ENCODE measurements at regions of chr1 and their contacts with region 1.

Region 1: DNA sequence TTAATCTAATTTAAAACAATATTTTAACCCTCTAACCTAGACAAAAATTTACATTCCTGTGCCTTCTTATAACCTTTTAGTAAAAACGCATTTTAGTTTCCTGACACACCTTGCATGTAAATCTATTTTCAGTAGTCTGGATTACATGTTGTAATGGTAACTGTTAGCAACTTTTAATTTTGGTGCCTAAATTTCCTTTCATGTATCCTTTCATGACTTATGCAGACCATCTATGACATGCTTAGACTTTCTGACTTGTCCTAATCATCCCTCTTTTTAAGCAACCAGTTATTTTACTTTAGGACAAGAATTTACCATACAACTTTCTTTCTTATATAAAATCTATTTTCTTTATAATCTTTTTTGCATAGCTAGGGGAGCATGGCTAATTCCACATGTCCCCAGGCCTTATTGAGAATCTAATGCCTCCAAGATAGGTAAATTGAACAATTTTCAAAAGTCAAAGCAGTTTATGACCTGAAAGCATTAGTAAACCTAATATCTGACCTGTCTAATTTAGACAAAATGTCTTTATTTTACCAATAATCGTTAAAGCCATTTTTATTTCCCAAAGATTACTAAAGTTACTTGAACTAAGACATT is 57.5 kb upstream of the IL12RB2 start:
- DNase-seq: no peak
- ATAC-seq: no peak
- H3K4me3 ChIP-seq: no peak overlapping the region
- H3K4me3 Mint-ChIP-seq: no peak overlapping the region
- H3K27ac ChIP-seq: no peak overlapping the region
- H3K27ac Mint-ChIP-seq: no peak overlapping the region
- H3K4me1 ChIP-seq: no peaks in the 10 kb centered on the region
- H3K4me1 Mint-ChIP-seq: no peaks in the 10 kb centered on the region
- H3K27me3 ChIP-seq: no peaks in the 10 kb centered on the region
- H3K27me3 Mint-ChIP-seq: no peaks in the 10 kb centered on the region
- CTCF ChIP-seq: no peak

Region 2: GRCh38 chr1:67261680-67262079 is 11.5 kb after region 1 on chr1:
- CTCF ChIA-PET with region 1: no interaction called
- POLR2A ChIA-PET with region 1: no interaction called
- intact Hi-C with region 1: loop called in 1 of 2 experiments (anchors 1 kb)
- DNase-seq: peak in 10 of 14 experiments; percentile 2 to 57 (median 30)
- ATAC-seq: peak; percentile 66
- H3K4me3 ChIP-seq: no peak overlapping the region
- H3K4me3 Mint-ChIP-seq: no peak overlapping the region
- H3K27ac ChIP-seq: no peak overlapping the region
- H3K27ac Mint-ChIP-seq: no peak overlapping the region
- H3K4me1 ChIP-seq: peaks cover 12% of the 10 kb centered on the region
- H3K4me1 Mint-ChIP-seq: peaks cover 29% of the 10 kb centered on the region
- H3K27me3 ChIP-seq: no peaks in the 10 kb centered on the region
- H3K27me3 Mint-ChIP-seq: no peaks in the 10 kb centered on the region
- CTCF ChIP-seq: no peak